Aorta (tissue), 5 donors: ENCODE measurements at regions of chr7 and their contacts with region 1.

Region 1: GRCh38 chr7:2354186-2354938 is at the start of gene EIF3B:
- DNase-seq: peak; percentile 95
- ATAC-seq: peak; percentile 97
- H3K4me3 ChIP-seq: peak within 1 kb of the TSS; percentile 83 to 95
- H3K27ac ChIP-seq: peak within 1 kb of the TSS; percentile 84 to 91
- H3K4me1 ChIP-seq: no peaks in the 10 kb centered on the region
- H3K27me3 ChIP-seq: no peaks in the 10 kb centered on the region
- total RNA-seq, gene EIF3B: 84.7 to 95.2 TPM

Region 2: GRCh38 chr7:1664711-1665548 is 689.4 kb before region 1 on chr7:
- intact Hi-C with region 1: loop called in 1 of 2 experiments (anchors 10 kb)
- DNase-seq: peak; percentile 69 to 91
- ATAC-seq: no peak
- H3K4me3 ChIP-seq: peak overlapping the region; percentile 43 to 58
- H3K27ac ChIP-seq: no peak overlapping the region
- H3K4me1 ChIP-seq: no peaks in the 10 kb centered on the region
- H3K27me3 ChIP-seq: no peaks in the 10 kb centered on the region

Region 3: DNA sequence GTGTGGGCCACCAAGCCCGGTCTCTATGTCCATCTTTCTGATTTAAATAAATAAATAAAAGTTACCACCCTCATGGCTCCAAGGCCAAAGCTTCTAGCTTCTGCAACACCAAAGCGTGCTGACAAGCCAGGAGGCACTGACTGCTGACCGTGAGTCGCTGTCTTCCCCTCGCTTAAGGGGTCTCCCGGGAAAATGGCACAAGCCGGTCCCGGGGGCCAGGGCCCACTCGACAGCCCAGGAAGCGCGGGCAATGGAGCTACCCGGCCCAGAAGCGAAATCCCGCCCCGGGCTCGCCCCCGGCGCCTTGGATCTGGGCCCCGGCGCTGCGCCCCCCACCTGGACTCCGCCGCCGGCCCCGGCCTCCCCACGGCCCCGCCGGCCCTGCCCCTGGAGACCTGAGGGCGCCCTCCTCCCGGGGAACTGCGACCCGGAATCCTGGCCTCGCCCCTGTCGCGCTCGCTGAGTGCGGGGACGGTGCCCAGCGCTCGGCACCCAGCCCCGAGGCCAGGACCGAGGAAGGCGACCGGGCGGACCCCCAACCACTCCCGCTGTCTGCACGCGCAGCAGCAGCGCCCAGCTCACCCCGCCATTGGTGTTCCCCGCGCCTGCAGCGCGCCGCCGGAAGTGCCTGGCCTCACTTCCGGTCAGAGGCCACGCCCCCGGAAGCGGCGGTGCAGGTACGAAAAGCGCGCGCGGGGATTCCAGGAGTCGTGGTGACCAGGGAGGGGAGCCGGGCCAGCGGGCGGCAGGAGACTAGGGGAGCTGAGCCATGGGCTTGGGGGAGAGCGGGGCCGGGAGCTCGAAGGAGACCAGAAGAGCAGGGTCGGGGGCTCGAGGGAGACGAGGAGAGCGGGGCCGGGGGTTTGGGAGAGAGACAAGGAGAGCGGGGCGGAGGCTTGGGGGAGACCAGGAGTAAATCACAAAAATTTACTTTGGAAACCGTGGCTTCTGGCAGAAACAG is 112.5 kb before region 1 on chr7 and contains the starts of genes MRM2 and NUDT1:
- intact Hi-C with region 1: loop called (anchors 5 to 10 kb)
- DNase-seq: peak; percentile 86 to 94
- ATAC-seq: peak; percentile 93
- H3K4me3 ChIP-seq: peak within 1 kb of the TSS; percentile 91 to 96
- H3K27ac ChIP-seq: no peak within 1 kb of the TSS
- H3K4me1 ChIP-seq: peaks cover 0 to 4% of the 10 kb centered on the region in 2 donors
- H3K27me3 ChIP-seq: no peaks in the 10 kb centered on the region
- total RNA-seq, gene MRM2: 11.5 to 14.9 TPM
- total RNA-seq, gene NUDT1: 11.1 to 11.9 TPM

Region 4: DNA sequence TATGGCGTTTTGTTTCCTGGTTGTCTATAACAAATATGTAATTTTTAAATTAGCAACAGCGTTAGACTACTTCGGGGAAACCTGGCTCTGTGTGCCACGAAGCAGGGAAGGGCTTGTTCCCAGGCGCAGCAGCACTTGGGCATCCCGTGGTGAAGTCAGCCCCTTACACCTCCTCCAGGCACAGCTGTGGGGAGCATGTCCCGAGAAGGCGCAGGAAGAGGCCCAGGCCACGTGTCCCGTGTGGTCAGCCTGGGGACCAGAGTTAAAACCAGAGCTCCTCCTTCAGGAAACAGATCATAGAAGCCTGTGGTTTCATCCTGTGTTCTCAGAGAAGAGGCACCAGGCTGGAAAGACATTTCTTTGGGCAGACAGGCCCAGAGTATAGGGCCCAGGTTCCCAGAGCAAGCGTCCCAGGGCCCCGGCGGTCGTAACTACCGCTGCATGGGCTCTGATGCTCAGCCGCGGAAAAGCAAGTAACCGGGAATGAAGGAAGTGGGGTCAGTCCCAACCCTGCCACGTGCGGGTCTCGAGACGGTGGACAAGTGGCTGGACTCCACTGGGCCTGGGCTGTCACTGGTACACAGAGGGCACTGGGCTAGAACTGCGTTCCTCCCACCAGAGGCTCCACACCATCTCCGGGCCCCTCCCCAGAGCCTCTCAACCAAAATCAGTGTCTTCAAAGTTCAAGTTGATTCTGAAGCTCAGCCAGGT is 105.2 kb before region 1 on chr7:
- intact Hi-C with region 1: loop called (anchors 5 to 10 kb)
- DNase-seq: peak; percentile 88 to 91
- ATAC-seq: peak; percentile 79
- H3K4me3 ChIP-seq: no peak overlapping the region
- H3K27ac ChIP-seq: no peak overlapping the region
- H3K4me1 ChIP-seq: no peaks in the 10 kb centered on the region
- H3K27me3 ChIP-seq: no peaks in the 10 kb centered on the region

Region 5: GRCh38 chr7:2314209-2314955 is 40.0 kb before region 1 on chr7 and contains the start of gene SNX8:
- intact Hi-C with region 1: loop called in 1 of 2 experiments (anchors 2 kb)
- DNase-seq: peak; percentile 91 to 98
- ATAC-seq: peak; percentile 98
- H3K4me3 ChIP-seq: peak within 1 kb of the TSS; percentile 44 to 62
- H3K27ac ChIP-seq: no peak within 1 kb of the TSS
- H3K4me1 ChIP-seq: no peaks in the 10 kb centered on the region
- H3K27me3 ChIP-seq: no peaks in the 10 kb centered on the region
- total RNA-seq, gene SNX8: 25.9 to 26.5 TPM